GM10248 (cell line): ENCODE measurements at regions of chr10 and their contacts with region 1.

Region 1: GRCh38 chr10:23405540-23405939 is 33.3 kb upstream of the OTUD1 start:
- DNase-seq: no peak
- CTCF ChIP-seq: no peak

Region 2: GRCh38 chr10:23391821-23392220 is 13.7 kb before region 1 on chr10:
- CTCF ChIA-PET with region 1: interaction called, 16 read pairs
- POLR2A ChIA-PET with region 1: no interaction called
- DNase-seq: no peak
- CTCF ChIP-seq: no peak

Region 3: GRCh38 chr10:23417244-23417643 is 11.7 kb after region 1 on chr10:
- CTCF ChIA-PET with region 1: no interaction called
- POLR2A ChIA-PET with region 1: no interaction called
- DNase-seq: no peak
- CTCF ChIP-seq: no peak

Region 4: DNA sequence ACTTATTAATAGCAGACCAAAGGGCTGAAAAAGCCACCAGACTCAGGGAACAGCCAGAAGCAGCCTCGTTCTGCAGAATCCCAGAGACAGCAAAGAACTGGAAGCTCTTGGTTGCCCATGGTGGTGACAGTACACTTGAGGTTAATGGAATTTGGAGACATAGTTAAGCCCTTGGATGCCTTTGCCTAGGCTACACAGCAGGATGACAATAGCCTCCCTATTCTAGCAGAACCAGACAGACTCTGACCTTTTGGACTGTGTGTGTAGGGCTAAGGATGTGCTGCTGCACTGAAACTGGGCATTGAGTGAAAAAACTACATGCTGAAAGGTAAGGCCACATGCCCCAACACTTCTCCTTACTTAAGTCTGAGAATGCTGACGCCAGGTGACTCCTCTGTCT is 56.0 kb after region 1 on chr10:
- CTCF ChIA-PET with region 1: no interaction called
- POLR2A ChIA-PET with region 1: no interaction called
- DNase-seq: no peak
- CTCF ChIP-seq: no peak